ENCODE measurements at regions of chr2 and their contacts with region 1.

Region 1: GRCh38 chr2:24269265-24269664 is 91.1 kb downstream of the ITSN2 start:
- DNase-seq: peak; percentile 65
- ATAC-seq: no peak; the same call in 1 of the 2 replicates
- H3K4me3 ChIP-seq: no peak overlapping the region
- H3K27ac ChIP-seq: no peak overlapping the region
- H3K4me1 ChIP-seq: no peaks in the 10 kb centered on the region
- H3K27me3 ChIP-seq: no peaks in the 10 kb centered on the region
- CTCF ChIP-seq: no peak

Region 2: GRCh38 chr2:24075915-24076848 is 193.1 kb before region 1 on chr2 and contains the start of gene SF3B6:
- CTCF ChIA-PET with region 1: no interaction called
- POLR2A ChIA-PET with region 1: interaction called, 11 read pairs
- in situ Hi-C with region 1: no loop called
- intact Hi-C with region 1: no loop called
- DNase-seq: peak; percentile 99
- ATAC-seq: peak; percentile 96
- H3K4me3 ChIP-seq: peak within 1 kb of the TSS; percentile 96 to 97
- H3K27ac ChIP-seq: peak within 1 kb of the TSS; percentile 94
- H3K4me1 ChIP-seq: peaks cover 13% of the 10 kb centered on the region; the same call in 1 of the 2 replicates
- H3K27me3 ChIP-seq: no peaks in the 10 kb centered on the region
- CTCF ChIP-seq: no peak
- total RNA-seq, gene SF3B6: 129 TPM

Region 3: GRCh38 chr2:24360050-24360962 is 91.0 kb after region 1 on chr2 and contains the start of gene ITSN2:
- CTCF ChIA-PET with region 1: no interaction called
- POLR2A ChIA-PET with region 1: interaction called, 11 read pairs
- in situ Hi-C with region 1: no loop called
- intact Hi-C with region 1: no loop called
- DNase-seq: no peak
- ATAC-seq: peak; percentile 97
- H3K4me3 ChIP-seq: peak within 1 kb of the TSS; percentile 80 to 92
- H3K27ac ChIP-seq: peak within 1 kb of the TSS; percentile 95
- H3K4me1 ChIP-seq: peaks cover 9% of the 10 kb centered on the region; the same call in 1 of the 2 replicates
- H3K27me3 ChIP-seq: no peaks in the 10 kb centered on the region
- CTCF ChIP-seq: no peak
- total RNA-seq, gene ITSN2: 57.7 TPM

Region 4: DNA sequence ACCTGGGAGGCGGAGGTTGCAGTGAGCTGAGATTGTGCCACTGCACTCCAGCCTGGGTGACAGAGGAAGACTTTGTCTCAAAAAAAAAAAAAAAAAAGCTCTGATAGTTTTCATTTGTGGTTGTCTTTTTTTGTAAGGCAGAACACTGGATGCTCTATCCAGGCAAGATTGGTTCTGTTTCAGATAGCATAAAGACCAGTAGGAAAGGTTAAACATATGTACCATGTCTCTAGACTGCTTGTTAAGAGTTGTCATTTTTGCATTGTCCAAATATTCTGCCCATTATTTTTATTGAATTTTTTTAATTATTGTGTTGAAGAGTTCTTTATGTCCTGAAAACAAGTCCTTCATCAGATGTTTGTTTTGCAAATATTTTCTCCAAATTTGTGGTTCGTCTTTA is 281.8 kb after region 1 on chr2:
- CTCF ChIA-PET with region 1: no interaction called
- POLR2A ChIA-PET with region 1: no interaction called
- in situ Hi-C with region 1: no loop called
- intact Hi-C with region 1: no loop called
- DNase-seq: no peak
- ATAC-seq: no peak
- H3K4me3 ChIP-seq: no peak overlapping the region
- H3K27ac ChIP-seq: no peak overlapping the region
- H3K4me1 ChIP-seq: no peaks in the 10 kb centered on the region
- H3K27me3 ChIP-seq: no peaks in the 10 kb centered on the region
- CTCF ChIP-seq: no peak